ENCODE measurements at regions of chr19 and their contacts with region 1.

Region 1: DNA sequence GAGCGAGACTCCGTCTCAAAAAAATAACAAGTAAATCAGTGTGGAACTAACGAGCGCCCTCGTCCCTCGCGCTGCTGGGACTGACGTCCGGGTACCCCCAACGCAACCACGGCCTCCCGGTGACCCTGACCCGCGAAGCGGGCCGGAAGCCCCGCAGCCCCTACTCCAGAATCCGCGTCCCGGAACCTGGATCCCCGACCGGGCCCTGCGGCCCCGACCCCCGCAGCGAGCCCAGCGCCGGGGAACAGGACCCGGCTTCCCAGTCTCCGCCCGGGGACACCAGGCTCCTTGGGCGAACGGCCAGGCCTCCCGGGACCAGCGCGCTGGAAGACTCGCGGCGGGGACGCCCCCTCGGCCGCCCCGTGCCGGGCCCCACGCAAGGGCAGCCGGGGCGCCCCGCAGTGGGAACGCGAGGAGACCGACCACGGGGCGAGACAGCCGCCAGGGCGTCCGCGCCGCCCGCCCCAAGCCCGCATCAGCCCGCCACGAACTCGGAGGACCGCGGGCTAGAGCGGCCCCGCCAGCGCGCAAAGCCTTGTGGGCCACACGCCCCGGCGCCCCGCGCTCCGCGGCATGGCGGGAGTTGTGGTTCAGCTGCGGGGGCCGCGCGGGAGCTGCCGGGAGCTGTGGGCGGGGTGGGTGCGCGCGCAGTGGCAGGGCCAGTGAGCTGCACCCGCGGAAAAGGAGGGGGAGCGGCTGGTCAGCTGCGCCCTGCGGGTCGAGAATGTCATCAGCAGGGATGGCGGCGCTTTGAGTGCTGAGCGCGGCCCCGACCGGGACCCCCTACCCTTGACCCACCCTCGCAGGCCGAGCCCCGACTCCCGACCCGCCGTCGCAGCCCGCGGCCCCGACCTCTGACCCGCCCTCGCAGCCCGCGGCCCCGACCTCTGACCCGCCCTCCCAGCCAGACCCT is 7.5 kb upstream of the MADCAM1 start:
- DNase-seq: peak; percentile 98 to 99 (median 98)
- ATAC-seq: peak; percentile 95 to 97 (median 96)
- H3K4me3 ChIP-seq: peak overlapping the region; percentile 74 to 99 (median 93)
- H3K27ac ChIP-seq: peak overlapping the region; percentile 75 to 97 (median 94)
- H3K4me1 ChIP-seq: peaks cover 0 to 18% (median 4%) of the 10 kb centered on the region in 12 donors
- H3K27me3 ChIP-seq: peaks cover 0 to 32% (median 8%) of the 10 kb centered on the region in 9 donors
- CTCF ChIP-seq: peak in 2 of 12 donors; percentile 15 to 26
- POLR2A ChIP-seq: peak in 1 of 2 donors; percentile 91

Region 2: GRCh38 chr19:294946-295686 is 193.6 kb before region 1 on chr19:
- intact Hi-C with region 1: loop called in 1 of 10 experiments (anchors 10 kb)
- DNase-seq: peak in 1 of 5 donors; percentile 73
- ATAC-seq: peak; percentile 43 to 77 (median 66)
- H3K4me3 ChIP-seq: peak overlapping the region in 11 of 12 donors; percentile 2 to 41 (median 19)
- H3K27ac ChIP-seq: peak overlapping the region in 9 of 12 donors; percentile 22 to 69 (median 49)
- H3K4me1 ChIP-seq: peaks cover 0 to 35% (median 25%) of the 10 kb centered on the region in 12 donors
- H3K27me3 ChIP-seq: peaks cover 23 to 53% (median 43%) of the 10 kb centered on the region in 9 donors
- CTCF ChIP-seq: peak; percentile 58 to 81 (median 74)
- POLR2A ChIP-seq: no peak

Region 3: GRCh38 chr19:383922-384798 is 104.6 kb before region 1 on chr19:
- intact Hi-C with region 1: loop called in 2 of 10 experiments (anchors 5 to 10 kb)
- DNase-seq: peak in 1 of 5 donors; percentile 72
- ATAC-seq: peak; percentile 42 to 87 (median 74)
- H3K4me3 ChIP-seq: no peak overlapping the region
- H3K27ac ChIP-seq: no peak overlapping the region
- H3K4me1 ChIP-seq: peaks cover 0 to 4% (median 0%) of the 10 kb centered on the region in 12 donors
- H3K27me3 ChIP-seq: peaks cover 0 to 39% (median 15%) of the 10 kb centered on the region in 9 donors
- CTCF ChIP-seq: peak; percentile 33 to 74 (median 62)
- POLR2A ChIP-seq: no peak

Region 4: GRCh38 chr19:392375-392970 is 96.3 kb before region 1 on chr19:
- intact Hi-C with region 1: loop called in 2 of 10 experiments (anchors 10 kb)
- DNase-seq: no peak
- ATAC-seq: no peak
- H3K4me3 ChIP-seq: no peak overlapping the region
- H3K27ac ChIP-seq: no peak overlapping the region
- H3K4me1 ChIP-seq: no peaks in the 10 kb centered on the region
- H3K27me3 ChIP-seq: peaks cover 0 to 29% (median 3%) of the 10 kb centered on the region in 9 donors
- CTCF ChIP-seq: no peak
- POLR2A ChIP-seq: no peak

Region 5: GRCh38 chr19:506404-507285 is 17.9 kb after region 1 on chr19:
- intact Hi-C with region 1: loop called in 1 of 10 experiments (anchors 2 kb)
- DNase-seq: peak; percentile 97 to 99 (median 99)
- ATAC-seq: peak; percentile 89 to 93 (median 91)
- H3K4me3 ChIP-seq: peak overlapping the region; percentile 70 to 100 (median 90)
- H3K27ac ChIP-seq: peak overlapping the region; percentile 83 to 99 (median 94)
- H3K4me1 ChIP-seq: peaks cover 6 to 39% (median 26%) of the 10 kb centered on the region in 12 donors
- H3K27me3 ChIP-seq: no peaks in the 10 kb centered on the region
- CTCF ChIP-seq: peak; percentile 89 to 100 (median 96)
- POLR2A ChIP-seq: peak in 1 of 2 donors; percentile 31

Measured in heart left ventricle (tissue), 16 donors.